ENCODE measurements at regions of chr18 and their contacts with region 1.

Region 1: DNA sequence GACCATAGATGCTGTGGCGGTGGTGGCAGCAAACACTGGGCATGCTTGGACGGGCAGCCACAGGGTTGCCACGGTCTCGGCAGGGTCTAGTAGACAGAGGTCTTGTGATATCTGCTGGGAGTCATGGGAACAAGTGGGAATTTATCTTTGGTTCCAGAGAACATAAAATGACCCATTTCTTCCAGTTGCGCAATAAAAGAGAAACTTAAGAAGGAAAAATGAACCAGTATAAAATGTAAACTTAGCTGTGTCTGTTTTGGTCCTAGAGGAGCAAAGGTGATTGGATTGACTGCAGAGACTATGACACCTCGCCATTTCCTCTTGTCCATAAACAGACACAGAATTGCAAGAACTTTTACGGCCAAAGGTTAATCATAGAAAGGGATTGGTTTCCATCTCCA is 132.6 kb upstream of the RBBP8 start:
- DNase-seq: no peak
- H3K4me3 Mint-ChIP-seq: no peak overlapping the region
- H3K27ac Mint-ChIP-seq: no peak overlapping the region
- H3K4me1 Mint-ChIP-seq: no peaks in the 10 kb centered on the region
- H3K27me3 Mint-ChIP-seq: no peaks in the 10 kb centered on the region

Region 2: GRCh38 chr18:22789600-22789999 is 11.0 kb before region 1 on chr18:
- CTCF ChIA-PET with region 1: no interaction called
- intact Hi-C with region 1: no loop called
- DNase-seq: no peak
- H3K4me3 Mint-ChIP-seq: no peak overlapping the region
- H3K27ac Mint-ChIP-seq: no peak overlapping the region
- H3K4me1 Mint-ChIP-seq: no peaks in the 10 kb centered on the region
- H3K27me3 Mint-ChIP-seq: peaks cover 19% of the 10 kb centered on the region

Region 3: GRCh38 chr18:22977847-22978701 is 177.5 kb after region 1 on chr18:
- CTCF ChIA-PET with region 1: interaction called, 5 read pairs
- intact Hi-C with region 1: loop called (anchors 1 kb)
- DNase-seq: peak; percentile 13
- H3K4me3 Mint-ChIP-seq: peak overlapping the region; percentile 29
- H3K27ac Mint-ChIP-seq: peak overlapping the region; percentile 83
- H3K4me1 Mint-ChIP-seq: peaks cover 20% of the 10 kb centered on the region
- H3K27me3 Mint-ChIP-seq: no peaks in the 10 kb centered on the region

Region 4: GRCh38 chr18:22983175-22983574 is 182.6 kb after region 1 on chr18:
- CTCF ChIA-PET with region 1: interaction called, 5 read pairs
- intact Hi-C with region 1: loop called (anchors 1 kb)
- DNase-seq: no peak
- H3K4me3 Mint-ChIP-seq: no peak overlapping the region
- H3K27ac Mint-ChIP-seq: no peak overlapping the region
- H3K4me1 Mint-ChIP-seq: peaks cover 10% of the 10 kb centered on the region
- H3K27me3 Mint-ChIP-seq: no peaks in the 10 kb centered on the region

Region 5: DNA sequence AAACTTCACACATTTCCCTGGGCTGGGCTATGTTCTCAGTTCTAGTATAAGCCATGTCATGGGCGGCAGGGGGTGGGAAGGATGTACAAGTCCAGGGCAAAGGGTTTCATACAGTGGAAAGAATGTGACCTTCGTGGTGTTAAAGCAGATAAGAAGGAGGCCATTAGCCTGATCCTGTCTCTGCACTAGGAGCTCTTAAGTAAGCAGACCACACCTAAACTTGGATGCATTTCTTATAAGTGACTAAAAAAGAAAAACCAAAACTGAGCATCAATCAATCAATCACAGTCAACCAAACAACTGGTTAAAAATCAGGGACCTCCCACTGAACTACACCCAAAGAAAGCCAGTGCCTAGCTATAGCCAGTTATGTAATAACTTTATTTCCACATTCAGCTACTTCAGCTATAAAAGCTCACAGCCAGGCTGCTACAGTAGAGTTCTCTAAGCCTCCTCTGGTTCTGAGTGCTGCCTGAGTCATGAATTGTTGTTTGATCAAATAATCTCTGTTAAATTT is 605.8 kb after region 1 on chr18:
- CTCF ChIA-PET with region 1: no interaction called
- intact Hi-C with region 1: loop called (anchors 2 kb)
- DNase-seq: no peak
- H3K4me3 Mint-ChIP-seq: no peak overlapping the region
- H3K27ac Mint-ChIP-seq: no peak overlapping the region
- H3K4me1 Mint-ChIP-seq: no peaks in the 10 kb centered on the region
- H3K27me3 Mint-ChIP-seq: no peaks in the 10 kb centered on the region